Activated CD8-positive, alpha-beta T cell treated with anti-CD3 and anti-CD28 coated beads, Interleukin-2, amount 10 ng/mL, durations not matched to agents 7 days and 5 days (primary cell): ENCODE measurements at regions of chr2 and their contacts with region 1.

Region 1: GRCh38 chr2:105576440-105577252 is 168.1 kb upstream of the NCK2 start:
- DNase-seq: no peak
- ATAC-seq: peak; percentile 60
- H3K4me3 Mint-ChIP-seq: no peak overlapping the region
- H3K27ac Mint-ChIP-seq: peak overlapping the region; percentile 53
- H3K4me1 Mint-ChIP-seq: peaks cover 29% of the 10 kb centered on the region
- H3K27me3 Mint-ChIP-seq: peaks cover 7% of the 10 kb centered on the region

Region 2: DNA sequence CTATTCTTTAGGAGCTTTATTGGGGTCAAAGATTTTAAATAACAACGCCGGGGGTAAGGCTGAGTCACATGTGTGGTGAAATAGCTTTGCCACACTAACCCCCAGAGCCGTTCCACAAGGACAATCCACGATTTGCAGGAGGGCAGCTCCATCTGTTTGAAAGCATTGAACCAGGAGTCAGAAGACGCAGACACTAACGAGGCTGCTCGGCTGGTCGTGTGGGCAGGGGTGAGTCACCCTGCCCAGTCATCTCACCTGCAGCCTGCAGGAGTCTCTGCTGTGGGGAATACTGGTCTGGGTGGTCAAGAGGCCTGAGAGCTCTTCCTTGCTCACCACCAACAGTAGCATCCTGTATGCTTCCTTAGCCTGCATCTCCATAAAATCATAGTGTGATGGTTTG is 18.9 kb after region 1 on chr2:
- CTCF ChIA-PET with region 1: interaction called, 10 read pairs
- POLR2A ChIA-PET with region 1: no interaction called
- DNase-seq: no peak
- ATAC-seq: no peak
- H3K4me3 Mint-ChIP-seq: no peak overlapping the region
- H3K27ac Mint-ChIP-seq: no peak overlapping the region
- H3K4me1 Mint-ChIP-seq: peaks cover 3% of the 10 kb centered on the region
- H3K27me3 Mint-ChIP-seq: no peaks in the 10 kb centered on the region

Region 3: GRCh38 chr2:105754011-105754410 is 177.4 kb after region 1 on chr2:
- CTCF ChIA-PET with region 1: interaction called, 10 read pairs
- POLR2A ChIA-PET with region 1: no interaction called
- DNase-seq: peak; percentile 71
- ATAC-seq: peak; percentile 59
- H3K4me3 Mint-ChIP-seq: peak overlapping the region; percentile 35
- H3K27ac Mint-ChIP-seq: peak overlapping the region; percentile 88
- H3K4me1 Mint-ChIP-seq: peaks cover 91% of the 10 kb centered on the region
- H3K27me3 Mint-ChIP-seq: no peaks in the 10 kb centered on the region